Endothelial cell of umbilical vein (primary cell): ENCODE measurements at regions of chr5 and their contacts with region 1.

Region 1: DNA sequence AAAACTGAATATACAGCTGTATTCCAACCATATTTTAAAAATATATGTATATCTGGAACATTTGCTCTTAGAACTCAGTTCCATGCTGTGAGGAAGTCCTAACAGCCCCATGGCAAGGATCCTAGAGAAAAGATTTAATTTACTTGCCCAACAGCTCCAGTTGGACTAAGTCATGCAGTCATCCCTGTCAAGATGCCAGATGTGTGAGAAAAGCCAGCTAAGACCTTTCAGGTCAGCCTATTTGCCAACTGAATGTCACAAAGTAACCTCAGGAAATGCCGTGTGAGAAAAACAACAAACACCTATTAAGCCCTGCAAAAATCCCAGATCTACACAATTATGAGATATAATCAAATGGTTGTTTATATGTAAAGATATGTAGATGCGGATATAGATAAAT is 416.3 kb downstream of the NR2F1-AS1 start:
- DNase-seq: peak; percentile 80
- H3K4me3 ChIP-seq: no peak overlapping the region
- H3K27ac ChIP-seq: peak overlapping the region; percentile 100
- H3K4me1 ChIP-seq: peaks cover 45% of the 10 kb centered on the region
- H3K27me3 ChIP-seq: no peaks in the 10 kb centered on the region
- CTCF ChIP-seq: no peak
- POLR2A ChIP-seq: no peak

Region 2: GRCh38 chr5:93078082-93079038 is 86.3 kb before region 1 on chr5:
- CTCF ChIA-PET with region 1: no interaction called
- POLR2A ChIA-PET with region 1: no interaction called
- dilution Hi-C with region 1: no loop called
- intact Hi-C with region 1: loop called (anchors 1 kb)
- DNase-seq: peak; percentile 99
- H3K4me3 ChIP-seq: no peak overlapping the region
- H3K27ac ChIP-seq: peak overlapping the region; percentile 89
- H3K4me1 ChIP-seq: peaks cover 18% of the 10 kb centered on the region
- H3K27me3 ChIP-seq: no peaks in the 10 kb centered on the region
- CTCF ChIP-seq: no peak
- POLR2A ChIP-seq: peak; percentile 50

Region 3: GRCh38 chr5:93117751-93118531 is 46.7 kb before region 1 on chr5:
- CTCF ChIA-PET with region 1: no interaction called
- POLR2A ChIA-PET with region 1: interaction called, 4 read pairs
- dilution Hi-C with region 1: no loop called
- intact Hi-C with region 1: loop called (anchors 2 kb)
- DNase-seq: peak; percentile 72
- H3K4me3 ChIP-seq: no peak overlapping the region
- H3K27ac ChIP-seq: peak overlapping the region; percentile 70
- H3K4me1 ChIP-seq: peaks cover 15% of the 10 kb centered on the region
- H3K27me3 ChIP-seq: no peaks in the 10 kb centered on the region
- CTCF ChIP-seq: no peak
- POLR2A ChIP-seq: no peak

Region 4: GRCh38 chr5:93192087-93192486 is 27.4 kb after region 1 on chr5:
- CTCF ChIA-PET with region 1: interaction called, 6 read pairs
- POLR2A ChIA-PET with region 1: interaction called, 3 read pairs
- dilution Hi-C with region 1: no loop called
- intact Hi-C with region 1: loop called (anchors 2 kb)
- DNase-seq: peak; percentile 73
- H3K4me3 ChIP-seq: no peak overlapping the region
- H3K27ac ChIP-seq: peak overlapping the region; percentile 68
- H3K4me1 ChIP-seq: peaks cover 34% of the 10 kb centered on the region
- H3K27me3 ChIP-seq: no peaks in the 10 kb centered on the region
- CTCF ChIP-seq: no peak
- POLR2A ChIP-seq: no peak

Region 5: GRCh38 chr5:93273176-93273575 is 108.5 kb after region 1 on chr5:
- CTCF ChIA-PET with region 1: interaction called, 4 read pairs
- POLR2A ChIA-PET with region 1: no interaction called
- dilution Hi-C with region 1: no loop called
- intact Hi-C with region 1: loop called (anchors 1 kb)
- DNase-seq: peak; percentile 55
- H3K4me3 ChIP-seq: no peak overlapping the region
- H3K27ac ChIP-seq: peak overlapping the region; percentile 99
- H3K4me1 ChIP-seq: peaks cover 30% of the 10 kb centered on the region
- H3K27me3 ChIP-seq: no peaks in the 10 kb centered on the region
- CTCF ChIP-seq: no peak
- POLR2A ChIP-seq: no peak

Region 6: GRCh38 chr5:93512799-93513198 is 348.1 kb after region 1 on chr5:
- CTCF ChIA-PET with region 1: no interaction called
- POLR2A ChIA-PET with region 1: no interaction called
- dilution Hi-C with region 1: no loop called
- intact Hi-C with region 1: loop called (anchors 2 kb)
- DNase-seq: peak; percentile 95
- H3K4me3 ChIP-seq: no peak overlapping the region
- H3K27ac ChIP-seq: peak overlapping the region; percentile 86
- H3K4me1 ChIP-seq: peaks cover 25% of the 10 kb centered on the region
- H3K27me3 ChIP-seq: no peaks in the 10 kb centered on the region
- CTCF ChIP-seq: no peak
- POLR2A ChIP-seq: no peak